MCF 10A (cell line): ENCODE measurements at regions of chr2 and their contacts with region 1.

Region 1: DNA sequence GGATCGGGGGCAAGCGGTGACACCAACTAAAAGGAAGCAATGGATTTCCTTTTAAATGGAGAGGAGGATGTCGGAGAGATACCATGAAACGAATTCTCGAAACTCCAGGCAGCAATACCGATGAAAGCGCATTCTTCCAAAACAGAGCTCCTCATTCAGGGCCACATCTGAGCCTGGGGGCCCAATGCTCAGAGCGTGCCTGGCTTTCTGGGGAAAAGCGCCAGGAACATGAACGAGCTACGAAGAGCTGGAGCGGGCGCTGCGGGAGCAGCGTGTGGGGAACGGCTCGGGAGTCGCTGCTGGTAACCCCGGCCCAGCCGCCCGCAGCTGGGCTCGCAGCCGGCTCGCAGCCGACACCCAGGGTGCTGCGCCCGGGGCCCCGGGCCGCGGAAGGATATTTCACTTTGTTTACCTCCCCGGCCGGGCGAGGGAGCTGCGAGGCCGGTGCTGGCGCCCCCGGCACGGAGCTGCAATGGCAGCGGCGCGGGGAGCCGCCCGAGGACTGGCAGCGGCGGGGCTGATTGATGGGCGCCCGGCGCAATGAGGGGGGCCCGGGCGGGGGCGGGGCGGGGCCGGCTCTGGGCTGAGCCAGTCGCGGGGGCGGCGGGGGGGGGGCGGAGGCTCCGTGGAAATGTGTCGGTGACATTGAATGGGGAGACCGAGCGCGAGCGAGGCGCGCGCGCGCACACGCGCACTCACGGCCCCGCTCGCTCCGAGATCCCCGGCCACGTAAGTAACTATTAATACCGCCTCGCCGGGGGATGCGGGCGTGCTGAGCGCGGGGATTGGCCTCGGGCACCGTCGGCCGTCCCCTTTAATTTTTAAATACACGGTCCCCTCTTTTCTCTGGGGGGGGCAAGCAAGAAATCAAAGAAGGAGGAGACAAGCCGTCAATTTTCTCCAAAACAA is at the start of gene TRIB2:
- DNase-seq: peak; percentile 82
- H3K4me3 Mint-ChIP-seq: peak within 1 kb of the TSS; percentile 95
- H3K27ac Mint-ChIP-seq: peak within 1 kb of the TSS; percentile 85
- H3K4me1 Mint-ChIP-seq: peaks cover 47% of the 10 kb centered on the region
- H3K27me3 Mint-ChIP-seq: no peaks in the 10 kb centered on the region
- CTCF ChIP-seq: no peak
- total RNA-seq, gene TRIB2: 12.9 and 14.3 TPM in 2 replicates

Region 2: DNA sequence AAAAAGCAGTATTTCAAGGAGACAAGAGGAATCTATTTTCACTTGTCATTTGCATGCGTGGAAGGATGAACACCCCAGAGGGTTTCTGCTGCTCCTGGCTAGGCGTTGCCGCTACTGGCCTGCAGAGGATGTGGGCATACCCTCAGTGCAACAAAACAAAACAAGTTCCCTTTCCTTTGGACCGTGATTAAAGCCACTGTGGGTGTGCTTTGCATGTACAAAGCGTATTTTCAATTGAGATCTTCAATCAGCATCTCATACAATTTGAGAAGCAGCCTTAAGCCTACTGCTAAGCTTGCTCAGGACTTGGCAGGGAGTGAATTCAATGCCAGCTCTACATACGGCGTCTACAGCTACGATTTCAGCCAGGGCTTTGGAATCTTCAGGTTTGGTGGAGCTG is 671.7 kb before region 1 on chr2:
- CTCF ChIA-PET with region 1: no interaction called
- POLR2A ChIA-PET with region 1: no interaction called
- intact Hi-C with region 1: loop called (anchors 10 kb)
- DNase-seq: no peak
- H3K4me3 Mint-ChIP-seq: no peak overlapping the region
- H3K27ac Mint-ChIP-seq: no peak overlapping the region
- H3K4me1 Mint-ChIP-seq: peaks cover 23% of the 10 kb centered on the region
- H3K27me3 Mint-ChIP-seq: no peaks in the 10 kb centered on the region
- CTCF ChIP-seq: no peak

Region 3: GRCh38 chr2:12282780-12283695 is 433.5 kb before region 1 on chr2:
- CTCF ChIA-PET with region 1: no interaction called
- POLR2A ChIA-PET with region 1: no interaction called
- intact Hi-C with region 1: loop called (anchors 10 kb)
- DNase-seq: no peak
- H3K4me3 Mint-ChIP-seq: no peak overlapping the region
- H3K27ac Mint-ChIP-seq: no peak overlapping the region
- H3K4me1 Mint-ChIP-seq: peaks cover 31% of the 10 kb centered on the region
- H3K27me3 Mint-ChIP-seq: no peaks in the 10 kb centered on the region
- CTCF ChIP-seq: no peak

Region 4: DNA sequence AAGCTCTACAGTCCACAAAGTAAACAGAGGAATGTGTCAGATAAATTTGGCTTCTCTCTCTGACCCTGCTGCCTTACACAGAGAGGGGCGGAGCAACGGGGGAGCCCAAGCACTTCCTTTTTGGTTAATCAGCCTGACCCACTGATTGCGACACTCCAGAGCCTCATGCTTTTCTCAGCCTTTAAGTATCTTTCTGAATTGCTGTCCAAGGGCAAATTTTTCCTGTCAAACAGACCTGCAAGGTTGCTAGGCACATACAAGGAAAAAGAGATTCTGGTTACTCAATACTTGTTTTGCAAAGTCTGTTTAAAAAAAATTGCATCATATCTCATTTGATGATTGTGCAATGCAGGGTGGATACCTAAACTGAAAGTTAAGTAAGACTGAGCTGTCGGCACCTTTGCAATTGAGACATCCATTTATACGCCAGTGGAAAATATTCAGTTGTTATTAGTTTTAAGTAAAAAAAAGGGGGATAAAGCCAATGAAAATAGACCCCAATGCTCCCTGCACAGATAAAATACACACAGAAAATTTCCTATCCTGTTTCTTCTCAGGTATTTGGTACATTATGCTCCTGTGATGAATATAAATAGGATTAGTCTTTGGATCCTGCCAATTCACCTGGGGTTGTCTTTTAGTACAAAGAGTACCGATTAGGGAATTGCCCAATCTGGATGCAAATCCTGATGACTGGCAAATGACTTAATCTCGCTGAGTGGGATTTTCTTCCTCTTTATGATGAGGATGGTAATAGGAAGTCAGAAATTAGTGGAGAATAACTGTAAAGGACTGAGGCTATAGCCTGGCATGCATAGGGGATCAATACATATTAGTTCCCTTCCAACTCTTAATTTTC is 260.0 kb before region 1 on chr2:
- CTCF ChIA-PET with region 1: interaction called, 14 read pairs
- POLR2A ChIA-PET with region 1: interaction called, 22 read pairs
- intact Hi-C with region 1: loop called (anchors 1 kb)
- DNase-seq: peak; percentile 100
- H3K4me3 Mint-ChIP-seq: peak overlapping the region; percentile 54
- H3K27ac Mint-ChIP-seq: peak overlapping the region; percentile 80
- H3K4me1 Mint-ChIP-seq: peaks cover 19% of the 10 kb centered on the region
- H3K27me3 Mint-ChIP-seq: no peaks in the 10 kb centered on the region
- CTCF ChIP-seq: no peak

Region 5: GRCh38 chr2:12619975-12620374 is 96.6 kb before region 1 on chr2:
- CTCF ChIA-PET with region 1: no interaction called
- POLR2A ChIA-PET with region 1: no interaction called
- intact Hi-C with region 1: loop called (anchors 5 kb)
- DNase-seq: peak; percentile 95
- H3K4me3 Mint-ChIP-seq: no peak overlapping the region
- H3K27ac Mint-ChIP-seq: no peak overlapping the region
- H3K4me1 Mint-ChIP-seq: peaks cover 15% of the 10 kb centered on the region
- H3K27me3 Mint-ChIP-seq: no peaks in the 10 kb centered on the region
- CTCF ChIP-seq: no peak

Region 6: DNA sequence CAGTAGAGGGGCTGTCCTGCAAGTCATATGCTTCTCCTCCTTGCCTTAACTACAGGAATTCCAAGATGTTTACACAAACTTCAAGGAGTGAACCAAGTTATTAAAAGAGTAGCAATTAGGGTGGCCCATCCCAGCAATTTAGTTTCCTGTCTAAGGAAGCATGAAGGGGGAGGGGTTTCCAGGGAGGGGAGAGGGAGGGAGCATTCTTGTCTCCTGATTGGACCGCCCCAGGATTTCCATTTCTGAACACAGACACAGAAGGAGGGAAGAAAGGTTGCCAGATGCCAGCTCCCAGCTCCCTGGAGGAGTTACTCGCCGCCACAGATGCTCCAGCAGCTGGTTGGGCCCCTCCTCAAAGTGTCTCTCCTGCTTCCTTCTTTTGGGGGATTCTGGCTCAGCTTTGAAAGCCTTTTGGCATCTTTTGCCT is 107.8 kb after region 1 on chr2:
- CTCF ChIA-PET with region 1: no interaction called
- POLR2A ChIA-PET with region 1: no interaction called
- intact Hi-C with region 1: no loop called
- DNase-seq: no peak
- H3K4me3 Mint-ChIP-seq: no peak overlapping the region
- H3K27ac Mint-ChIP-seq: no peak overlapping the region
- H3K4me1 Mint-ChIP-seq: peaks cover 7% of the 10 kb centered on the region
- H3K27me3 Mint-ChIP-seq: no peaks in the 10 kb centered on the region
- CTCF ChIP-seq: no peak

Region 7: DNA sequence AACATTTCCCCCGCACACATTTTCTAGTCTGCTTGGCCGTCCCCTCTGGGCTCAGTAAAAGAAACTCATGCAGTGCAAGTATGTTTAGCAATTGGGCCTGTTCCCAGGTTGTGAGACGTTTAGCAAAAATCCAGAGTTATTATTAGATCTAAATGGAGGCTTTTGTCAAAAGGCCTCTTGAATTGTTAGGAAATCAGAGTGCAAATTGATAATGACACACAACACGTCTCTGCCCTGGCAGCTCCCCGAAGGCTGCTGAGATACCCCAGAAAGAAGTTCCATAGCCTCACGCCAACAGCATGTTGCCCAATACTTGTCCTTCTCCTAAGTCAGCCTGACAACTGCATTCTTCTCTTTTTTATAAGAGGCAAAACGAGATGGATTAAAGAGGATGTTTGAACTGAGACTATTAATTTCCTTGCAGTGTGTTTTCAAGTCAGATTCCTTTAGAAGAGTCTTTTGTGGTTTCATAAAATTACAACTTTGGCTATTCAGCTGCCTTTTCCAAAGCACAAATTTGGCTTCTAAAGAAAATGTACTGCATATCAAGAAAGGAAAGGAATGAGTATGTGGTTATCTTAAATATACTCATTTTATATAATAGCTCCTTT is 202.4 kb after region 1 on chr2:
- CTCF ChIA-PET with region 1: no interaction called
- POLR2A ChIA-PET with region 1: no interaction called
- intact Hi-C with region 1: no loop called
- DNase-seq: peak; percentile 18
- H3K4me3 Mint-ChIP-seq: no peak overlapping the region
- H3K27ac Mint-ChIP-seq: no peak overlapping the region
- H3K4me1 Mint-ChIP-seq: peaks cover 6% of the 10 kb centered on the region
- H3K27me3 Mint-ChIP-seq: no peaks in the 10 kb centered on the region
- CTCF ChIP-seq: no peak

Region 8: GRCh38 chr2:13353083-13353482 is 636.5 kb after region 1 on chr2:
- CTCF ChIA-PET with region 1: no interaction called
- POLR2A ChIA-PET with region 1: no interaction called
- intact Hi-C with region 1: no loop called
- DNase-seq: no peak
- H3K4me3 Mint-ChIP-seq: no peak overlapping the region
- H3K27ac Mint-ChIP-seq: no peak overlapping the region
- H3K4me1 Mint-ChIP-seq: no peaks in the 10 kb centered on the region
- H3K27me3 Mint-ChIP-seq: no peaks in the 10 kb centered on the region
- CTCF ChIP-seq: no peak

Region 9: DNA sequence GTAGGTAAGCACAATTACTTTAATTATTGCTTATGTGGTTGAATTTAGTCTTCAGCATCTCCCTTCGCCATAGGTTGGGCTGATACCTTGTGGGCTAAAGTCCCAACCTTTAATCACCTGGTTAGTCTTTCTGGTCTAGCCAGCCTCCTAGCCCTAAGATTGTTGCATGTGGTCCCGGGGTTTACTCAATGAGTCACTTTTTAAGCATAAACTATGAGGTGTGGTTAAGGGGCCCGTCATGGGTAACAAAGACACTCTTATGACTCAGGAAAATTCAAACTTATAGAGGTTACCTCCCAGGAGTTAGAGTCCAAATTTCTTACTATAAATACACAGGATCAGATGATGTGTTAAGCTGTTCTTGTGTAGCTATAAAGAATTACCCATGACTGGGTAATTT is 841.8 kb after region 1 on chr2:
- CTCF ChIA-PET with region 1: no interaction called
- POLR2A ChIA-PET with region 1: no interaction called
- intact Hi-C with region 1: no loop called
- DNase-seq: peak; percentile 77
- H3K4me3 Mint-ChIP-seq: no peak overlapping the region
- H3K27ac Mint-ChIP-seq: peak overlapping the region; percentile 57
- H3K4me1 Mint-ChIP-seq: peaks cover 11% of the 10 kb centered on the region
- H3K27me3 Mint-ChIP-seq: no peaks in the 10 kb centered on the region
- CTCF ChIP-seq: no peak